Posterior vena cava (tissue), 2 donors: ENCODE measurements at regions of chr6 and their contacts with region 1.

Region 1: GRCh38 chr6:108902382-108902792 is 54.2 kb downstream of the ARMC2 start:
- DNase-seq: no peak

Region 2: DNA sequence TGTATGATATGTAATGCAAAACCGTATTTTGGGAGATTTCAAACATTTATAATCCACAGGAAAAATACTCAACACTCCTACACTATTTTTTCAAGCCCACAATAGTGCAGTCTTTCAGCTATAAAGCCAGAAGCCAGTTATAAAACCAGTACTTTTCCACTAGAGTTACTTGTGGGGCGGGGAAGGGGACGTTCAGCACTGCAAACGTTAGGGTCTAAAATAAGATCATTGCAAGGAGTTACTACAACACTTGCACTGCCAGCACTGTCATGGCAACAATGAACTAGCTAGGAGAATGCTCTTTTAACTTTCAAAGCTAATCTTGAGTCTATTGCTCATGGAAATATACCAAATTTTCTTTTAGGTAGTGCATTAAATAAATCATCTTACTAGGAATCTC is 177.6 kb after region 1 on chr6:
- intact Hi-C with region 1: loop called in 1 of 2 experiments (anchors 2 kb)
- DNase-seq: no peak

Region 3: DNA sequence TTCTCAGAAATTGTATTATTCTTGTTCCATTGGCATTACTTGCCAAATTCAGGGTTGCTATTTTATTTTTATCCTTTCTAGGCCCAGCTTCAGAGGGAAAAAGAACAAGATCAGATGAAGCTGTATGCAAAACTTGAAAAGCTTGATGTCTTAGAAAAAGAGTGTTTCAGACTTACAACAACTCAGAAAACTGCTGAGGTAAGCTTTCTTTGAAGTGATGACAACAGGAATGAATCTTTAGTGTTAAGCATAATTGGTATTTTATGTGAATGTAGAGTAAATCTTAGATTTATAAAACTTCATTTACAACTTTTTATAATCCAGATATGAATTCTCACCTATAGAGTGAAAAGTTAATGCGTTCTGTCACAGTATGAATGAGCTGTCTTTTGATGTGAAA is 251.4 kb after region 1 on chr6:
- intact Hi-C with region 1: no loop called
- DNase-seq: no peak